Panc1 (cell line): ENCODE measurements at regions of chr19 and their contacts with region 1.

Region 1: GRCh38 chr19:52962394-52963246 is at the start of gene ZNF816:
- DNase-seq: no peak
- ATAC-seq: peak; percentile 99
- H3K4me3 ChIP-seq: peak within 1 kb of the TSS; percentile 78 to 87
- H3K27ac ChIP-seq: peak within 1 kb of the TSS; percentile 86
- H3K4me1 ChIP-seq: no peaks in the 10 kb centered on the region; the same call in none of the 2 replicates
- H3K27me3 ChIP-seq: no peaks in the 10 kb centered on the region
- CTCF ChIP-seq: no peak
- total RNA-seq, gene ZNF816: 7.1 TPM

Region 2: GRCh38 chr19:51407511-51408131 is 1555.0 kb before region 1 on chr19:
- CTCF ChIA-PET with region 1: no interaction called
- POLR2A ChIA-PET with region 1: no interaction called
- in situ Hi-C with region 1: no loop called
- intact Hi-C with region 1: no loop called
- DNase-seq: no peak
- ATAC-seq: peak; percentile 68
- H3K4me3 ChIP-seq: no peak overlapping the region
- H3K27ac ChIP-seq: no peak overlapping the region
- H3K4me1 ChIP-seq: no peaks in the 10 kb centered on the region; the same call in 1 of the 2 replicates
- H3K27me3 ChIP-seq: no peaks in the 10 kb centered on the region
- CTCF ChIP-seq: peak; percentile 72

Region 3: GRCh38 chr19:52944244-52944643 is 18.4 kb before region 1 on chr19:
- CTCF ChIA-PET with region 1: interaction called, 11 read pairs
- POLR2A ChIA-PET with region 1: no interaction called
- in situ Hi-C with region 1: no loop called
- intact Hi-C with region 1: no loop called
- DNase-seq: no peak
- ATAC-seq: no peak
- H3K4me3 ChIP-seq: no peak overlapping the region
- H3K27ac ChIP-seq: no peak overlapping the region
- H3K4me1 ChIP-seq: no peaks in the 10 kb centered on the region
- H3K27me3 ChIP-seq: no peaks in the 10 kb centered on the region
- CTCF ChIP-seq: no peak